ENCODE measurements at regions of chr17 and their contacts with region 1.

Region 1: DNA sequence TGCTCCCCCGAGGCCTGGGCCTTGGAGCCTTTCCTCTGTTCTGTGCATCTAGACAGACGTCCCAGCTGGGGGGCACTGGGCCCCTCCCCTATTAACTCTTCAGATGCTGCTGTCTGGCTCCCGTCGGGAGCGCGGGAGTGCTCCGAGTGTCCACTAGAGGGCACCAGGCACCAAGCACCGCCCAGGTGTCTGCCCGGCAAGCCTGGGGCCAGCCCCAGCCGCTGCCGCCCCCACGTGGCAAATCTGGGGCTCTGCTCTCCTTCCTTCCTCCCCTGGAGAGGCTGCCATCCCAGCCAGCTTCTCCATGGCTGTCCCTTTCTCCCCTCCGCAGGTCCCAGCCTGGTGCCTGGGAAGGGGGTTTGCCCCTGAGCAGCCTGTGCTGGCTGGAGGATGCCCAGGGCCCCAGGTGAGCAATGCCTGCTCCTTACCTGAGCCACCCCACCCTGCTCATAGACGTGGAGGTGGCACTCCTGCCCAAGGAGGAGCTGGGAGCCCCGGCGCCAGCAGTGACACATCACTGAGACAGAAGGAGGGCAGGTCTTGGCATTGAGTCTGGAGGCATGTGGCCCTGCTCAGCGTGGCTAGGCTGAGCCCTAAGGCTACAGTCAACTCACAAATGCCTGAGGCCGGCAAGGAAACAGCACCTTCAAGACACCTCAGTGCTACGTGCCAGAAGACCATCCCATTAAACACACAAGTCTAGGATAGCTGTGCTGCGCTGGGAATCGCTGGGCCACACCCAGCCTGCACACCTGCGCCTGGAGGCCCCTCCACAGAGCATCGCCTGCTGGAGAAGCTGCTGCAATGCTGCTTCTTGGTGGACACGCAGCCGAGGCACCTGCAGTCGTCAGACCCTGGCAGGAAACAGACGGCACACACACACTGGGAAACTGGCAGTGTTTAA is 19.7 kb downstream of the TMEM235 start:
- DNase-seq: peak; percentile 90
- H3K4me3 ChIP-seq: no peak overlapping the region
- H3K27ac ChIP-seq: peak overlapping the region in 1 of 4 donors; percentile 4
- H3K4me1 ChIP-seq: peaks cover 0 to 16% (median 10%) of the 10 kb centered on the region in 4 donors
- H3K27me3 ChIP-seq: peaks cover 0 to 13% (median 0%) of the 10 kb centered on the region in 3 donors
- CTCF ChIP-seq: peak; percentile 88 to 99 (median 94)
- EP300 ChIP-seq: no peak
- POLR2A ChIP-seq: no peak

Region 2: GRCh38 chr17:78019367-78019975 is 231.7 kb before region 1 on chr17:
- intact Hi-C with region 1: loop called (anchors 5 kb)
- DNase-seq: no peak
- H3K4me3 ChIP-seq: no peak overlapping the region
- H3K27ac ChIP-seq: no peak overlapping the region
- H3K4me1 ChIP-seq: peaks cover 0 to 9% (median 0%) of the 10 kb centered on the region in 4 donors
- H3K27me3 ChIP-seq: no peaks in the 10 kb centered on the region
- CTCF ChIP-seq: peak; percentile 13 to 56 (median 46)
- EP300 ChIP-seq: no peak
- POLR2A ChIP-seq: no peak

Region 3: GRCh38 chr17:78112518-78113226 is 138.5 kb before region 1 on chr17:
- intact Hi-C with region 1: loop called (anchors 1 kb)
- DNase-seq: peak; percentile 83
- H3K4me3 ChIP-seq: no peak overlapping the region
- H3K27ac ChIP-seq: no peak overlapping the region
- H3K4me1 ChIP-seq: peaks cover 0 to 14% (median 5%) of the 10 kb centered on the region in 4 donors
- H3K27me3 ChIP-seq: peaks cover 0 to 20% (median 6%) of the 10 kb centered on the region in 3 donors
- CTCF ChIP-seq: peak; percentile 94 to 99 (median 98)
- EP300 ChIP-seq: no peak
- POLR2A ChIP-seq: no peak

Region 4: GRCh38 chr17:78214706-78215061 is 36.5 kb before region 1 on chr17:
- intact Hi-C with region 1: loop called (anchors 2 kb)
- DNase-seq: no peak
- H3K4me3 ChIP-seq: peak overlapping the region in 3 of 4 donors; percentile 31 to 43 (median 42)
- H3K27ac ChIP-seq: no peak overlapping the region
- H3K4me1 ChIP-seq: peaks cover 0 to 11% (median 7%) of the 10 kb centered on the region in 4 donors
- H3K27me3 ChIP-seq: no peaks in the 10 kb centered on the region
- CTCF ChIP-seq: no peak
- EP300 ChIP-seq: no peak
- POLR2A ChIP-seq: no peak

Region 5: DNA sequence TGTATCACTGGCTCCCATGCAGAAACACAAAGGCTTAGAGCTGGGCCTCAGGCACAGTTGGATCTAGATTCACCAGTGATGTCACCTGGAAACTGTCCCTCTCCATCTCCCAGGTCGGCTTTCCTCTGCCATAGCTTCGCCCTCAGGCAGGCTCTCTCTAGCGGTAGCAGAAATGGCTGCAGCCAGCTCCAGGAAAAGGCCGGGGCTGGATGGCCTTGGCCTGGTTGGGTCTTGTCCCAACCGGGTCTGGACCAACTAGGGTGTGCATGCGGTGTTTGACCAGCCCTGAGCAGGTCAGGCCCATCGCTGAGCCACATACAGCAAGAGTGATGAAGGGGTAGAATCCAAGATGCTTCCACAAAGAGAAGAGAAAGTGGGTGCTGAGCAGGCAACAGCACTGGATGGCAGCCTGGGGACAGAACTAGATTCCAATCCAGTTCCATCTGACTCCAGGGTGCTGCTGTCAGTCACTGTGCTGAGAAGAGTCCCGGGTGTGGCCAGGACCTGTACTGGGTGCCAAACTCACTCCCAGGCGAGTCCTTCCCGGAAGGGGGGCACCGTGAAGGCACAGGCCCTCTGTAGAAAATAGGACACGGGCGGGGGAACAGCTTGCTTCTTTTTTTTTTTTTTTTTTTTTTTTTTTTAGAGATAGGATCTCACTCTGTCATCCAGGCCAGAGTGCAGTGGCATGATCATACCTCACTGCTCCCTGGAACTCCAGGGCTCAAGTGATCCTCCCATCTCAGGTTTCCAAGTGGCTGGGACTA is 56.9 kb after region 1 on chr17:
- intact Hi-C with region 1: no loop called
- DNase-seq: no peak
- H3K4me3 ChIP-seq: no peak overlapping the region
- H3K27ac ChIP-seq: no peak overlapping the region
- H3K4me1 ChIP-seq: no peaks in the 10 kb centered on the region
- H3K27me3 ChIP-seq: no peaks in the 10 kb centered on the region
- CTCF ChIP-seq: no peak
- EP300 ChIP-seq: no peak
- POLR2A ChIP-seq: no peak

Region 6: GRCh38 chr17:78421484-78422266 is 170.5 kb after region 1 on chr17:
- intact Hi-C with region 1: loop called (anchors 1 kb)
- DNase-seq: peak; percentile 88
- H3K4me3 ChIP-seq: no peak overlapping the region
- H3K27ac ChIP-seq: no peak overlapping the region
- H3K4me1 ChIP-seq: peaks cover 0 to 10% (median 8%) of the 10 kb centered on the region in 4 donors
- H3K27me3 ChIP-seq: no peaks in the 10 kb centered on the region
- CTCF ChIP-seq: peak; percentile 91 to 99 (median 97)
- EP300 ChIP-seq: no peak
- POLR2A ChIP-seq: no peak

Measured in sigmoid colon (tissue), 7 donors.